CD14-positive monocyte (primary cell): ENCODE measurements at regions of chr17 and their contacts with region 1.

Region 1: DNA sequence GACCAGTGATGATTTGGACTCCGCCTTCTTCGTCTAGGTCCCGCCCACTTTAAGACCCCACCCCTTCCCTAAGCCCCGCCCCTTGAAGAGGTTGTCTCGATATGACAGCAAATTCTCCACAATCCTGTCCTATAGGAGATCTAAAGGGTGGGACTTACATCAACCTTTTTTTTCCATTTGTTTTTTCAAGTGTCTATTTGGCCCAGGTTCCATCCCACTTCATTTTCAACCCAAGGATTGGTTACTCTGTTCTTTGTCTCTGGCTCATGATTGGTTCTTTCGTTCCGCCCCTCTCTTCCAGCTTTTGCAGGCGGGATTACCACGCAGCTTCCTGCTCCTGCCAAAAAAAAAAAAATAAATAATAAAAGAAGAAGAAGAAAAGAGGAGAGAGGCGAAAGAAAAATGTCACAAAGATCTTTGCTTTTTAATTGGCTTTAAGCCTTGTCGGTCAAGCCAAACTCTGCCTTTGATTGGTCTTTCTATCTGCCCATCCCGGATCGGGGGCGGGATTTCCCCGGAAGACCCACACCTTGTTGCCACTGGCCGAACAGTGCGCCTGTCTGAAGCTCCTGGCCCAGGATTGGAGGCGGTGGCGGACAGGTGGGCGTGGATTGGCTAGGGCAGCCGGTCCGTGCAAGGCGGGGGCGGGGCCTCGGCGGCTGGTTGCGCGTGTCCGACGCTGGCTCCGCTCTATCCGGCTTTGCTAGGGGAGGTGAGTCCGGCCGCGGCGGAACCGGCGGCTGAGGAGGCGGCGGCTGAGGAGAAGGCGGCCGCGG is 1.2 kb upstream of the NLK start:
- DNase-seq: peak; percentile 99
- H3K4me3 ChIP-seq: peak overlapping the region; percentile 75 to 82 (median 80)
- H3K4me3 Mint-ChIP-seq: peak overlapping the region; percentile 65 to 79
- H3K27ac ChIP-seq: peak overlapping the region; percentile 59 to 78
- H3K27ac Mint-ChIP-seq: peak overlapping the region; percentile 85 to 96 (median 90)
- H3K4me1 ChIP-seq: peaks cover 36 to 45% of the 10 kb centered on the region in 2 donors
- H3K4me1 Mint-ChIP-seq: peaks cover 49% of the 10 kb centered on the region
- H3K27me3 ChIP-seq: no peaks in the 10 kb centered on the region
- H3K27me3 Mint-ChIP-seq: peaks cover 2 to 16% (median 6%) of the 10 kb centered on the region in 3 donors
- CTCF ChIP-seq: no peak

Region 2: DNA sequence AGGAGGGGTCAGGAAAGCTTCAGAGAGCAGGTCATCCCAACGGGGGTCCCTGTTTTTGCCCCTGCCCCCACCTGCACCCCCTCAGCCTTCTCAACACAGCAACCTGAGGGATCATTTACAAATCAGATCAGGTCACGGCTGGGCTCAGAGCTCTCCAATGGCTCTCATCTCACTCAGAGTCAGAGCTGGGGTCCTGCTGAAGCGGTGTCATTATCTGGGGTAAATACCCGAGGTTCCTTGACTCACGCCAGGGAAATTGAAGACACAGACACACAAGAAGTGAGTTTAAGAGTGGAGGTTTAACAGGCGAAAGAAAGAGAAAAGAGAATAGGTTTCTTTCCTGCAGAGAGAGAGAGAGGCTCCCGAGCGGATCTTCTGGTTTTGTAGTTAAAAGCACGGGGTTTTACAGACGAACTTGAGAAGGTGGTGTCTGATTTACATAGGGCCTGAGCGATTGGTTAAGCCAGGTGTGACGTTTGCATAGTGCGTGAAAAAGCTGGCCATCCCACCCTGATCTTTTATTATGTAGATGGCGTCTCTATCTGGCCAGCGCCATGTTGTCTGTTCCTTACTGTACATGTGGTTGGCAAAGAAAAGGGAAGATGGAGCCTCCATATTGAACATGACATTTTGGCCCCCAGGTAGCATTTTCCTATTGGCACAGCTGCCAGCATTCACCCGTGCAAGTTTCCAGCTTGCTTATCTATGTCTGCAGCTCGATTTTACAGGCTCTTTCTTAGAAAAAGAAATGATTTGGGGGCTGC is 695.9 kb before region 1 on chr17:
- intact Hi-C with region 1: loop called in 1 of 2 experiments (anchors 10 kb)
- DNase-seq: no peak
- H3K4me3 ChIP-seq: no peak overlapping the region
- H3K4me3 Mint-ChIP-seq: no peak overlapping the region
- H3K27ac ChIP-seq: no peak overlapping the region
- H3K27ac Mint-ChIP-seq: no peak overlapping the region
- H3K4me1 ChIP-seq: peaks cover 43 to 51% of the 10 kb centered on the region in 2 donors
- H3K4me1 Mint-ChIP-seq: peaks cover 46% of the 10 kb centered on the region
- H3K27me3 ChIP-seq: no peaks in the 10 kb centered on the region
- H3K27me3 Mint-ChIP-seq: peaks cover 0 to 3% (median 0%) of the 10 kb centered on the region in 3 donors
- CTCF ChIP-seq: no peak

Region 3: GRCh38 chr17:27980043-27980442 is 61.2 kb before region 1 on chr17:
- intact Hi-C with region 1: no loop called
- DNase-seq: no peak
- H3K4me3 ChIP-seq: no peak overlapping the region
- H3K4me3 Mint-ChIP-seq: no peak overlapping the region
- H3K27ac ChIP-seq: no peak overlapping the region
- H3K27ac Mint-ChIP-seq: peak overlapping the region in 1 of 7 donors; percentile 43
- H3K4me1 ChIP-seq: peaks cover 6 to 7% of the 10 kb centered on the region in 2 donors
- H3K4me1 Mint-ChIP-seq: peaks cover 14% of the 10 kb centered on the region
- H3K27me3 ChIP-seq: no peaks in the 10 kb centered on the region
- H3K27me3 Mint-ChIP-seq: peaks cover 5 to 11% (median 7%) of the 10 kb centered on the region in 3 donors
- CTCF ChIP-seq: no peak

Region 4: GRCh38 chr17:28124962-28125361 is 83.7 kb after region 1 on chr17:
- intact Hi-C with region 1: loop called in 1 of 2 experiments (anchors 5 kb)
- DNase-seq: no peak
- H3K4me3 ChIP-seq: no peak overlapping the region
- H3K4me3 Mint-ChIP-seq: no peak overlapping the region
- H3K27ac ChIP-seq: no peak overlapping the region
- H3K27ac Mint-ChIP-seq: no peak overlapping the region
- H3K4me1 ChIP-seq: no peaks in the 10 kb centered on the region
- H3K4me1 Mint-ChIP-seq: peaks cover 2% of the 10 kb centered on the region
- H3K27me3 ChIP-seq: no peaks in the 10 kb centered on the region
- H3K27me3 Mint-ChIP-seq: no peaks in the 10 kb centered on the region
- CTCF ChIP-seq: no peak